ENCODE measurements at regions of chr12 and their contacts with region 1.

Region 1: GRCh38 chr12:55926738-55927587 is 731 bp downstream of the PYM1 start:
- DNase-seq: peak; percentile 95 to 97 (median 96)
- H3K4me3 ChIP-seq: peak overlapping the region; percentile 83 to 100 (median 99)
- H3K27ac ChIP-seq: peak overlapping the region; percentile 90 to 97
- H3K4me1 ChIP-seq: peaks cover 23 to 61% (median 47%) of the 10 kb centered on the region in 4 experiments
- H3K27me3 ChIP-seq: no peaks in the 10 kb centered on the region

Region 2: DNA sequence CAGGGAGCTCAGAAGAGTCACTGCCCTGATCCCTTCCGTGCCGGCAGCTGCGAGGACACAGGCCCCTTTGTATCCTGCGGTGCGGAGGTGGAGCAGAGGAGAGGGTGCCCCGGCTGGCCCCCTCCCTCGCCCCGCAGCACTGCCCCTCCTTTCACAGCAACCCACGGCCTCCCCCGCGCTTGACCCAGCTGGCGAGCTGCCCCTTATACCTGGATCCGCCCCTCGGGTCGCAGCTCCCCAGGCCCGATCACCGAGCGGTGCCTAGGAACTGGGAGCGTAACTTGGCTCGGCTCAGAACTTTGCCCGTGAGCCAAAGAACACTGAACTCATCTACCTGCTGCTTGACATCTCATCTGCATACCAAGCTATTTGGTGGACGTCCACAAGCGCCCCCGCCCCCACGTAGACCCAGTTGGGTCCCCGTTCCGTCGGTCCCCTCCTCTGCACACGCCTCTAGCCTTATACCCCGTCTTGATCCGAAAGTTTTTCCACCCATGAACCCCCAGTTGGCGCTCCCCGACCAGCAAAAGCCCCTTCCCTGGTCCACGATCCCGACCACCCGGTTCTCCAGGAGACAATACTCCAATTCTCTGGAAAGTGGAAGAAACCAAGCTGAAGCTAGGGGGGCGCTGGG is 96.9 kb before region 1 on chr12:
- CTCF ChIA-PET with region 1: interaction called, 14 read pairs
- POLR2A ChIA-PET with region 1: interaction called, 13 read pairs
- DNase-seq: peak in 2 of 3 donors; percentile 69 to 77
- H3K4me3 ChIP-seq: peak overlapping the region; percentile 82 to 100 (median 96)
- H3K27ac ChIP-seq: peak overlapping the region; percentile 95 to 98
- H3K4me1 ChIP-seq: peaks cover 3 to 50% (median 43%) of the 10 kb centered on the region in 4 experiments
- H3K27me3 ChIP-seq: no peaks in the 10 kb centered on the region

Region 3: DNA sequence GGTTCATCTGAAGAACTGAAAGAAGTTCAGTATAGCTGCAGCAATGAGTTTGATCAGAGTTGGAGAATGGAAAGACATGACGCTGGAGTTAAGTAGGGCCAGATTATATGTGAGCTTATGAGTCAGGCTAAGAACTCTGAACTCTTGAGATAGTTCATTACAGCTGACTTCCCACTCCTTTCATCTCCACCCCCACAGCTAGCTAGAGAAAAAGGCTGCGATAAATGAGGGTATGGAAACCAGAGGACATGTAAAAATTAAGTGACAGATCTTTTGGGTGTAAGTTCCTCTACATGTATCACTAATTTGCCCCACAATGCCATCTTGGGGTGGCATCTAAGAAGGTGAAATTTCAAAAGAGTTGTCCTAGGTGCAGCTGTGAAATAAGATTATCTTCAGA is 27.9 kb before region 1 on chr12:
- CTCF ChIA-PET with region 1: no interaction called
- POLR2A ChIA-PET with region 1: no interaction called
- DNase-seq: peak in 2 of 3 donors; percentile 12 to 14
- H3K4me3 ChIP-seq: no peak overlapping the region
- H3K27ac ChIP-seq: no peak overlapping the region
- H3K4me1 ChIP-seq: no peaks in the 10 kb centered on the region
- H3K27me3 ChIP-seq: no peaks in the 10 kb centered on the region

Region 4: DNA sequence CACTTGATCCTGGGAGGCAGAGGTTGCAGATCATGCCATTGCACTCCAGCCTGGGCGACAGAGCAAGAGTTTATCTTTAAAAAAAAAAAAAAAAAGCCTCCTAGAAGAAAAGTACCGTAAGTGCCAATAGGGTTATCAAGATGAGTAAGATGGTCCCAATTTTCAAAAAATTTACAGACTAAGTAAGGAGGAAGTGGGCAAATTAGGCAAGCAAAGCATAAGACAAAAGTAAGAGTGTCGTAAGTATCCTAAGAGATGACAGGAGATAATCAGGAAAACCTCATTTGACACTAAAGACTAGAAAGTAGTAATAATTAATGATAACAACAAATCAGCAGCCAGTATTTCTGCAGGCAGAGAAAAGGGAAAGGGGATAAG is 11.5 kb before region 1 on chr12:
- CTCF ChIA-PET with region 1: interaction called, 31 read pairs
- POLR2A ChIA-PET with region 1: no interaction called
- DNase-seq: no peak
- H3K4me3 ChIP-seq: no peak overlapping the region
- H3K27ac ChIP-seq: peak overlapping the region in 1 of 2 experiments; percentile 25
- H3K4me1 ChIP-seq: peaks cover 0 to 5% (median 0%) of the 10 kb centered on the region in 4 experiments
- H3K27me3 ChIP-seq: no peaks in the 10 kb centered on the region

Region 5: DNA sequence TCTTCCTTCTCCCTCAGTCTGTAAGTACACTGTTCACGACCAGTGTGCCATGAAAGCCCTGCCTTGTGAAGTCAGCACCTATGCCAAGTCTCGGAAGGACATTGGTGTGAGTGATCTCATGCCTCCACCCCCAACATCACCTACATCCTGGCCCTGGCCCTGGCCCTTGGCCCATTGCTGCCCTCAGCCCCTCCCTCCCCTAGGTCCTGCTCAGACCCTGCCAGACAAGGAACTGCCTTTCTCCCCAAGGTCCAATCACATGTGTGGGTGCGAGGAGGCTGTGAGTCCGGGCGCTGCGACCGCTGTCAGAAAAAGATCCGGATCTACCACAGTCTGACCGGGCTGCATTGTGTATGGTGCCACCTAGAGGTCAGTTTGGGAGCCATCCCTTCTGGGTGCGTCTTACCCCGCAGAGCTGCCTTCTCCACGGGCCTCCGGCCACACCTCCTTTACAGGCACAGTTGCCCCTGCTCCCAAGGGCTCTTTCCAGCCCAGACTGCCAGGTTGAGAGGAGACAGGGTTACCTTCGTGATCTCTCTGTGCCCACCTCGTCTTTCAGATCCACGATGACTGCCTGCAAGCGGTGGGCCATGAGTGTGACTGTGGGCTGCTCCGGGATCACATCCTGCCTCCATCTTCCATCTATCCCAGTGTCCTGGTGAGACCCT is 13.2 kb after region 1 on chr12:
- CTCF ChIA-PET with region 1: interaction called, 27 read pairs
- POLR2A ChIA-PET with region 1: interaction called, 3 read pairs
- DNase-seq: peak; percentile 81 to 87 (median 82)
- H3K4me3 ChIP-seq: peak overlapping the region in 1 of 7 experiments; percentile 6
- H3K27ac ChIP-seq: no peak overlapping the region
- H3K4me1 ChIP-seq: peaks cover 0 to 8% (median 6%) of the 10 kb centered on the region in 4 experiments
- H3K27me3 ChIP-seq: no peaks in the 10 kb centered on the region

Measured in common myeloid progenitor, CD34-positive (primary cell).